ENCODE measurements at regions of chr6 and their contacts with region 1.

Region 1: GRCh38 chr6:42960243-42961019 is at the start of gene GNMT:
- DNase-seq: peak; percentile 74
- ATAC-seq: peak; percentile 85
- H3K4me3 ChIP-seq: peak within 1 kb of the TSS; percentile 79
- H3K27ac ChIP-seq: no peak within 1 kb of the TSS
- H3K4me1 ChIP-seq: peaks cover 15% of the 10 kb centered on the region; the same call in 1 of the 2 replicates
- H3K27me3 ChIP-seq: no peaks in the 10 kb centered on the region
- CTCF ChIP-seq: no peak
- total RNA-seq, gene GNMT: 0.47 and 1.2 TPM in 2 replicates

Region 2: GRCh38 chr6:42652024-42652746 is 308.2 kb before region 1 on chr6:
- CTCF ChIA-PET with region 1: no interaction called
- POLR2A ChIA-PET with region 1: interaction called, 12 read pairs
- intact Hi-C with region 1: no loop called
- DNase-seq: no peak
- ATAC-seq: no peak
- H3K4me3 ChIP-seq: no peak overlapping the region
- H3K27ac ChIP-seq: no peak overlapping the region
- H3K4me1 ChIP-seq: no peaks in the 10 kb centered on the region
- H3K27me3 ChIP-seq: no peaks in the 10 kb centered on the region
- CTCF ChIP-seq: no peak

Region 3: GRCh38 chr6:43286980-43287716 is 326.7 kb after region 1 on chr6:
- CTCF ChIA-PET with region 1: no interaction called
- POLR2A ChIA-PET with region 1: no interaction called
- intact Hi-C with region 1: no loop called
- DNase-seq: no peak
- ATAC-seq: no peak
- H3K4me3 ChIP-seq: no peak overlapping the region
- H3K27ac ChIP-seq: no peak overlapping the region
- H3K4me1 ChIP-seq: peaks cover 4% of the 10 kb centered on the region; the same call in 1 of the 2 replicates
- H3K27me3 ChIP-seq: peaks cover 8% of the 10 kb centered on the region; the same call in 1 of the 2 replicates
- CTCF ChIP-seq: 0 out of 2 replicates have a peak, but pooled peaks have one; percentile 12

Measured in PC-3 (cell line).